A549 (cell line): ENCODE measurements at regions of chr12 and their contacts with region 1.

Region 1: DNA sequence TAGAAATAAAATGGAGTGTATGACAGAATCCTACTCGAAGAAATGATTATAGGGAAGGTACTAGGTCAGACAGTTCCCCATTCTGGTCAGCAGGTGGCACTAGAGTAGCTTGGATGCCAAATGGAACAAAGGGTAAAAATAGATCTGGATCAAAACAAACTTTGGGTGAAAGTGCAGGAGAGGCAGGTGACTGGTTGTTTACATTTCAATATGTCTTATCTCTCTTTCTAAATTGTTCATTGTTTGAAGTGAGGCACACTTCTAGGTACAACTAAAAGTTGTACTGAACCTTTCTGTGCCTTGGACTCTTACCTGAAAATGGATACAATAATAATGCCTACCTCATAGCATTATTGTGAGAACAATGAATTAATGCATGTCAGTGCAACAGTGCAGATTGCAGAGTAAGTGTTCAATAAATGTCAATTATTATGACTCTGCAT is 62.0 kb upstream of the OSBPL8 start:
- DNase-seq: peak; percentile 68 to 73
- ATAC-seq: peak; percentile 85 to 92; a peak in 5 of 6 replicates
- H3K4me3 ChIP-seq: no peak overlapping the region
- H3K27ac ChIP-seq: no peak overlapping the region
- H3K4me1 ChIP-seq: no peaks in the 10 kb centered on the region
- CTCF ChIP-seq: peak; percentile 96
- EP300 ChIP-seq: no peak
- POLR2A ChIP-seq: no peak
- RAD21 ChIP-seq: peak; percentile 97 to 99

Region 2: DNA sequence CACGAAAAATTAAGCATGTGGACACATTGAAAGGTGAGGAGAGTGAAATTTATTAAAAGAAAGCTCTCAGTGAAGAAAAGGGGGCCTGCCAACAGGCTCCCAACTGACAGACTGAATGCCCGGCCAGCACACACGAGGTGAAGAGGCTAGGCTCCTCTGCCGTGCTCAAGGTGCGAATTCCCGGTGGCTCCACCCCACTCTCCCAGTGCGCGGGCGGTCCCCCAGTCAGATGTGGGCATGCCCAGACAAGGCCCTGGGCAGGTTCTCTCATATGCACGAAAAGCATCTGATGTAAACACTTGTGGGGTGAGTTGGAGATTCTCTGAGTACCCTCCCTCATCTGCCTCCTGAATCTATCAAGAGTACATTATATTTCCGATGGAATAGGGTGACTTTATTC is 13.5 kb before region 1 on chr12:
- CTCF ChIA-PET with region 1: interaction called, 22 read pairs
- POLR2A ChIA-PET with region 1: no interaction called
- DNase-seq: no peak
- ATAC-seq: no peak
- H3K4me3 ChIP-seq: no peak overlapping the region
- H3K27ac ChIP-seq: no peak overlapping the region
- H3K4me1 ChIP-seq: peaks cover 12% of the 10 kb centered on the region; the same call in 2 of the 3 replicates
- CTCF ChIP-seq: no peak
- EP300 ChIP-seq: no peak
- POLR2A ChIP-seq: no peak
- RAD21 ChIP-seq: no peak

Region 3: GRCh38 chr12:76631736-76632135 is 10.1 kb after region 1 on chr12:
- CTCF ChIA-PET with region 1: interaction called, 12 read pairs
- POLR2A ChIA-PET with region 1: no interaction called
- DNase-seq: no peak
- ATAC-seq: no peak
- H3K4me3 ChIP-seq: no peak overlapping the region
- H3K27ac ChIP-seq: no peak overlapping the region
- H3K4me1 ChIP-seq: peaks cover 13% of the 10 kb centered on the region
- CTCF ChIP-seq: no peak
- EP300 ChIP-seq: no peak
- POLR2A ChIP-seq: no peak
- RAD21 ChIP-seq: no peak

Region 4: DNA sequence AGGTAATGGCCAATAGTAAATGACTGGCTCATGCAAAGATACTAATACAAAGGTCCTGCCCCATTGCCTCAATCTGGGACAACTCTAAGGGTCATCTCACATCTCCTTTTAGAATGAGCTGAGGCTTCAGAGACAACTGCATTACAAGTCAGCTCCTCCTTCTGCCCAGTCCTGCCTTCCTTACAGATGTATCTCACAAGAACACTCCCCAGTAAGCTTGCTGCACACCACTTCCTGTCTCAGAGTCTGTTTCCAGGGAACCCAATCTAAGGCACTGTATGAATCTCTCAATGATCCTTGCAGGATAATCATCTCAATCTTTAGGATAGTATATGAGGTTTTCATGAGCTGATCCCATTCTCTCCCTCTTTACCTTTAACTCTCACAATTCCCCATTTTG is 84.5 kb after region 1 on chr12:
- CTCF ChIA-PET with region 1: no interaction called
- POLR2A ChIA-PET with region 1: no interaction called
- DNase-seq: no peak
- ATAC-seq: peak in 1 of 2 experiments; percentile 53; a peak in 2 of 6 replicates
- H3K4me3 ChIP-seq: no peak overlapping the region
- H3K27ac ChIP-seq: no peak overlapping the region
- H3K4me1 ChIP-seq: peaks cover 16% of the 10 kb centered on the region
- CTCF ChIP-seq: no peak
- EP300 ChIP-seq: no peak
- POLR2A ChIP-seq: no peak
- RAD21 ChIP-seq: no peak

Region 5: DNA sequence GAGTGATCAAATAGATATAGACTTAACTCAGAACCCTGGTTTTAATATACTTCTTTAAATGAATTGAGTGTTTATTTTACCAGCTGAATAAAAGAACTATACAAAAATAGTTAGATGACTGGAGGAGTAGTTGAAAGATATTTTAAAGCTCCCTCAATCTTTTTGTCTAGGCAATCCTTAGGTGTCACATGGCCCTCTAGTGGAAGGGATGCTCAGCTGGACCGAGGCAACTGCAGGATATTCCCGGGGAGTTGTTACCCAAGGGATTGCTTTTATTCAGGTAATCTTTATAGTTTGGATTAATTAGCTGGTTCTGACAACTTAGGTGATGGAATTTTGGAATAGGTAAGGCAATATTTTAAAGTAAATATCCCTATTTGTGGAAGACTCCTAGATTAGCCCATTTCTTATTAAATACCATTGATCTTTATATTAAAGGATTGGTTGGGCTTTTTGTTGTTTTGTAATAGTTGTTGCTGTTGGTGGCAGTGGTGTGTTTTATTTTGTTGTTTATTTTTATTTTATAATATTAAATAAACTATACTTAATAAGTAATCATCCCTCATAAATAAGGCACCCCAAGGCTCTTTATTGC is 199.4 kb after region 1 on chr12:
- CTCF ChIA-PET with region 1: interaction called, 11 read pairs
- POLR2A ChIA-PET with region 1: no interaction called
- DNase-seq: peak; percentile 39 to 52
- ATAC-seq: peak; percentile 78 to 91; a peak in 5 of 6 replicates
- H3K4me3 ChIP-seq: no peak overlapping the region
- H3K27ac ChIP-seq: no peak overlapping the region
- H3K4me1 ChIP-seq: no peaks in the 10 kb centered on the region
- CTCF ChIP-seq: peak; percentile 64
- EP300 ChIP-seq: no peak
- POLR2A ChIP-seq: no peak
- RAD21 ChIP-seq: peak; percentile 53 to 67; a peak in 4 of 5 replicates

Region 6: DNA sequence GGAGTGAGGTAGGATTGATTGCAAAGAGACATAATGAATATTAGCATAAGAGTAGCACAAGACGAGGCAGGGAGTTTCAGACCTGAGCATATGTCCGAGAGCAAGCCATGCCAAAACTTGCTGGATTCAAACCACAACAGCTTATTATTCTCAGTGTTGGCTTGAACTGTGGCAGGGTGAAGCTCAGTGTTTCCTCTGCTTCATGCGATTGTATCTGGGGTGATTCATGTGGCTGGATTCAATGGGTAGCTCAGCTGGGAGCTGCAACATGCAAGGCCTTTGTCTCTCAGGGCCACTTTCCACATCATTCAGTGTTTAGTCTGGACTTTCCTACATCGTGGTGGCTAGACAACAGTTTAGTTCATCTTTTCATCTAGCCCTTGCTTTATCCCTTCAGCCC is 465.8 kb after region 1 on chr12:
- CTCF ChIA-PET with region 1: no interaction called
- POLR2A ChIA-PET with region 1: no interaction called
- DNase-seq: no peak
- ATAC-seq: no peak; a peak in 1 of 6 replicates
- H3K4me3 ChIP-seq: no peak overlapping the region
- H3K27ac ChIP-seq: no peak overlapping the region
- H3K4me1 ChIP-seq: no peaks in the 10 kb centered on the region
- CTCF ChIP-seq: no peak
- EP300 ChIP-seq: no peak
- POLR2A ChIP-seq: no peak
- RAD21 ChIP-seq: no peak